Dorsolateral prefrontal cortex (tissue), 120 donors: ENCODE measurements at regions of chr16 and their contacts with region 1.

Region 1: GRCh38 chr16:87324411-87325275 is 7.5 kb upstream of the C16orf95 start:
- DNase-seq: peak in 3 of 10 donors; percentile 39 to 70 (median 40)
- H3K4me3 ChIP-seq: peak overlapping the region in 9 of 59 donors; percentile 8 to 43 (median 27)
- H3K27ac ChIP-seq: peak overlapping the region in 42 of 59 donors; percentile 20 to 90 (median 58)
- H3K27me3 ChIP-seq: no peaks in the 10 kb centered on the region
- CTCF ChIP-seq: peak; percentile 41 to 90 (median 81)

Region 2: DNA sequence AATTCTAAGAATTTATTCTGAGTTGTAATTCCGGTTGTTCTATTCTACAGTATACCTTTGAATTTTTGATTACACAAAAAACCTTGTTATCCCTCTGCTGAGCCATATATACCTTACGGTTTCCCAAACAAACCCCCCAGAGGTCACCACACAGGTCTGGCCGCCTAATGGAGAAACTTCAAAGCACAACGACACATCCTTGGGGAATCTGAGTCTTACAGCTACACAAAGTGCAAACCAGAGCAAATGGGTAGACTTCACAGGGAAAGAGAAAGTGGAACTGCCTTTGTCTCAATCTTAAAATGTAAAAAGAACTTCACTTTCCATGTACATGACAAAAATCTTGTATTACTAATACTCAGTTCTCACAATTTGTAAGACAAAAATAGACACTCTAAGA is 56.2 kb after region 1 on chr16:
- intact Hi-C with region 1: loop called (anchors 2 kb)
- DNase-seq: peak in 1 of 10 donors; percentile 11
- H3K4me3 ChIP-seq: peak overlapping the region in 53 of 59 donors; percentile 26 to 91 (median 79)
- H3K27ac ChIP-seq: peak overlapping the region in 41 of 59 donors; percentile 5 to 98 (median 52)
- H3K27me3 ChIP-seq: no peaks in the 10 kb centered on the region
- CTCF ChIP-seq: no peak

Region 3: DNA sequence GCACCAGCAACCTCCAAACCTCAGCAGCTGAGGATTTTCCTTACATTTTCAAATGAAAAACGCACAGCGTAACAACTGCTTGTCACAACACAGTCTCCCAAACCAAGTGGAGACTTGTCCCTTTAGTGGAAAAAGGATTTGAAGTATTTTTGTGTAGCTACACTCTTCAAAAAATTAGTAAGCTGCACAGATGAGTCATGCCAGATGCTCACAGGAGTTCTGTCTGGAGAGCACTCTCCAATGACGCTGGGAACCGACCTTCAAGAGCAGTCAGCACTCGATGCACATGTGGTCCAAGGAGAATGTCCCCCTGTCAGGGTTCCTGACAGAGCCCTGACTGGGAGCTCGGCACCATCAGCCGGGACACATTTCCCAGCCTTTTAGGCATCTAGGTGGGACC is 107.3 kb after region 1 on chr16:
- intact Hi-C with region 1: no loop called
- DNase-seq: peak in 3 of 10 donors; percentile 38 to 59 (median 48)
- H3K4me3 ChIP-seq: no peak overlapping the region
- H3K27ac ChIP-seq: peak overlapping the region in 32 of 59 donors; percentile 3 to 87 (median 51)
- H3K27me3 ChIP-seq: no peaks in the 10 kb centered on the region
- CTCF ChIP-seq: no peak

Region 4: GRCh38 chr16:87471278-87472141 is 146.9 kb after region 1 on chr16:
- intact Hi-C with region 1: loop called in 1 of 2 experiments (anchors 10 kb)
- DNase-seq: no peak
- H3K4me3 ChIP-seq: no peak overlapping the region
- H3K27ac ChIP-seq: peak overlapping the region in 12 of 59 donors; percentile 4 to 59 (median 20)
- H3K27me3 ChIP-seq: no peaks in the 10 kb centered on the region
- CTCF ChIP-seq: no peak

Region 5: GRCh38 chr16:87492721-87493607 is 168.3 kb after region 1 on chr16 and contains the start of gene ZCCHC14:
- intact Hi-C with region 1: loop called (anchors 5 to 10 kb)
- DNase-seq: peak; percentile 97 to 100 (median 99)
- H3K4me3 ChIP-seq: peak within 1 kb of the TSS; percentile 49 to 76 (median 64)
- H3K27ac ChIP-seq: peak within 1 kb of the TSS in 43 of 59 donors; percentile 8 to 81 (median 58)
- H3K27me3 ChIP-seq: no peaks in the 10 kb centered on the region
- CTCF ChIP-seq: peak in 14 of 56 donors; percentile 7 to 46 (median 17)
- total RNA-seq, gene ZCCHC14: 25.1 to 60.3 (median 37.0) TPM

Region 6: DNA sequence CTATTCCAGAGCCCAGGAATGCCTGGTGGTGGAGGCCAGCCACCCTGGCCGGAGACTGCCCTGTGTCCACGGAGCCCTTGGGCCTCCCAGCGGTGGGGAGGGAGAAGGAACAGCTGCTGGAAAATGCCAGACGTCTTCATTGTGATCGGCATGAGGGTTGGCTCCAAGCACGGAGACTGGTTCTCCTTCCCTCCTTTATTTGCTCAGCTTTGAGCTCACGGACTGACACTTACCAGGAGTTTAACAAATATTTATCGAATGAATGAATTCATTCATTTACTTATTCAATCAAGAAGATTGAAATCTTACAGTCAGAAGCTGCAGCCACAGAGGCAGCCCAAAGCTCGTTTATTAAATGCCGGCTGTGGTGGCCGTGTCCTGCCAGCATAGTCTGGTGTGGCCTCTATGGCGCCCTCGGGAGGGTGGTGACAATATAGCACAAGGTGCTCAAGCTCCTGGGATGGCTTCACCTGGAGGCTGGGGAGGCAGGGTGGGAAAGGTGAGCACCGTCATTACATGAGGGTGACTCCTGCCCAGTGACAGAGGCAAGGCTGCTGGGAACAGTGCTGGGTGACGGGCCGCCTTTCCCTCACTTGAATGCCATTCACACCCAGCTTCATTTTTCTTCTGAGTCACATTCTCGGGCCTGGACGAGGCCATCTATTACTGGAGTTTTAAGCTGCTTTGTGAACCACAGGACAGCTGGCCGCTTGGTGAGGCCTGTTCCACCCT is 246.7 kb after region 1 on chr16:
- intact Hi-C with region 1: no loop called
- DNase-seq: no peak
- H3K4me3 ChIP-seq: no peak overlapping the region
- H3K27ac ChIP-seq: no peak overlapping the region
- H3K27me3 ChIP-seq: peaks cover 0 to 11% (median 0%) of the 10 kb centered on the region in 45 donors
- CTCF ChIP-seq: peak in 39 of 56 donors; percentile 3 to 48 (median 31)

Region 7: DNA sequence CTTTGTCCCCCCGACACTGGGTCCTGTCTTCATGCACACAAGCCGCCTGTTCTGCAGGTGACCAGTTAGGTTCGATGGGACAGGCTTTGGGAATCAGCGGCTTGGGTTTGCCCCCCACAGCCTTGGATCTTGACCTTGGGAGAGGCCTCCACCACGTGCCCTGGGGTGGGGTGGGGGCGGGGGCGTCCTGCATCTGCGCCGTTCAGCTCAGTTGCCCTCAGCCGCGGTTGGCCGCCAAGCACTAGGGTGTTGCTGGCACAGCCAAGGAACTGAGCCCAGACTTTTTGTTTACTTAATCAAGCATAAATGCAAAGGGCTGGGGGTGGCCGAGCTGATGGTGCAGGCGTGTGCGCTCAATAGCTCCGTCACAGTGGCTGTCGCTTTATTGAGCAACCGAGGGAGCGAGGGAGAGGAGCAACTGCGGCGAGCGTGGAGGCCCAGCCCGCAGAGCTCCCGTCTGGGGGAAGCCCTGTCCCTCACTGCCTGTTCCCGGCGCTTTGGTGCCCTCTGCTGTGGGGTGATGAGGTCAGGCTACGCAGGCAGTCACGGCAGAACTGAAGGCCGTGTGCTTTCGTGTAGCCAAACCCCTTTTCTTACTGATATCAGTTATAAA is 311.5 kb after region 1 on chr16:
- intact Hi-C with region 1: loop called in 1 of 2 experiments (anchors 10 kb)
- DNase-seq: peak; percentile 61 to 90 (median 76)
- H3K4me3 ChIP-seq: peak overlapping the region; percentile 8 to 61 (median 42)
- H3K27ac ChIP-seq: peak overlapping the region in 11 of 59 donors; percentile 1 to 70 (median 36)
- H3K27me3 ChIP-seq: peaks cover 0 to 7% (median 0%) of the 10 kb centered on the region in 45 donors
- CTCF ChIP-seq: peak in 54 of 56 donors; percentile 32 to 80 (median 66)

Region 8: DNA sequence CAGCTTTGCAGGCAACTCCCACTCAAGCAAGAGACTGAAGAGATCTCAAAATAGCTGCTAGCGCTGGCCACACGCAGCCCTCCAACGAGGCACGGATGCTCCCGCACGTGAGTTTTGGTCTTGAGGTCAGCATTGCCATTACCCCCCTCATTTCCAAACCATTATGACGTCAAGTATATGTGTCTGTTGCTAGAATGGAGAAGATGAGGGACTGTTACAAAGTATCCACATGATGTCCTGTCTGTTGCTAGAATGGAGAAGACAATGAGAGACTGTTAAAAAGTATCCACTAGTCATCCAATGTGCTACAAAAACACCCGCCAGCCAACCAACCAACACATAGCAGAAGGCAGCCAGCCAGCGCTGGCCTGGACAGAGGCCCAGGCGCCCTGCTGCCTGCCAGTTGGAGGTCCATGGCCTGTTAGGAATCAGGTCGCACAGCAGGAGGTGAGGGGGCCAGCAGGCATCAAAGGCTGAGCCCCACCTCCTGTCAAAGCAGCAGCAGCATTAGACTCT is 416.3 kb after region 1 on chr16:
- intact Hi-C with region 1: loop called in 1 of 2 experiments (anchors 10 kb)
- DNase-seq: peak; percentile 21 to 85 (median 80)
- H3K4me3 ChIP-seq: peak overlapping the region in 7 of 59 donors; percentile 2 to 23 (median 5)
- H3K27ac ChIP-seq: peak overlapping the region in 47 of 59 donors; percentile 2 to 76 (median 46)
- H3K27me3 ChIP-seq: no peaks in the 10 kb centered on the region
- CTCF ChIP-seq: peak in 7 of 56 donors; percentile 11 to 42 (median 16)